Caco-2 (cell line): ENCODE measurements at regions of chr3 and their contacts with region 1.

Region 1: DNA sequence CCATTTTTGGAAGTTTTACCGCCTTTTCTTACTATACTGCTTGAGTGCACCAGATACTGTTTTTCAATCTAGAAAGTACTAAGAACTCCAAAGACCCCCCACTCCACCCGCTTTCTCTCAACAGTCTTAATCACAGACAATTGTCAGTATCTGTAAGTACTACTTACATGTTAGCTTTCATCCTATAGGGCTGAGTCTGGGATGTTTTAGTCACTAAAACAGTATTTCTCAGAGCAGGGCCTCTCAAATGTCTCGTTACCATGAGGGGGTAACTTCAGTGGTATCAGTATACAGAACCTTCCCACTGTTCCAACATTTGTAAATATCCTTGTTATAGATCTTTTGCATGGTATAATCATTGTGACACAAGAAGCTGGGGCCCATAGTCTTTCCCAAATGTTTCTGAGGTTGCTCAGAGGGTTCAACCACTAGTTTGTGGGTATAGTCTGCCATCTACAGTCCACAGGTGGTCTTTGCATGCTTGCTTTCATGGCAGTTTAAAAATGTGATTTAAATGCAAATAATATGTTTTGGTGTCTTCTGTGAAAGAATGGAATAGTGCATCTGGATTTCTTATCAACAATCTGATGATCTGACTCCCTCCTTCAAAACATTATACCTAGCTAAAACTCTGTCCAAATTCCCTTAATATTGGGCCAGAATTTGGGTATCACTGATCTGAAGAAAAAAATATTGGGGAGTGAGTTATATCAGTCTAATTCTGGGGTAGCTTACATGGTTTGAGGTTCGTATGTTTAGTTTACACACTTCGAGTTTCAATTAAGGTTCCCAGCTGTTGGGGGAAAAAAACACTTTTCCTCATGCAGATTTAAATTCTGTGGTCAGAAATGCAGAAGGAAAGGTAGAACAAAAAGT is 18.0 kb upstream of the DNAJC13 start:
- DNase-seq: peak in 1 of 2 experiments; percentile 49
- H3K4me3 ChIP-seq: no peak overlapping the region
- H3K4me3 Mint-ChIP-seq: no peak overlapping the region
- H3K27ac Mint-ChIP-seq: no peak overlapping the region
- H3K4me1 ChIP-seq: no peaks in the 10 kb centered on the region
- H3K4me1 Mint-ChIP-seq: no peaks in the 10 kb centered on the region
- H3K27me3 ChIP-seq: no peaks in the 10 kb centered on the region
- H3K27me3 Mint-ChIP-seq: no peaks in the 10 kb centered on the region
- CTCF ChIP-seq: peak; percentile 78 to 83

Region 2: GRCh38 chr3:132343018-132343612 is 56.2 kb before region 1 on chr3:
- CTCF ChIA-PET with region 1: interaction called, 3 read pairs
- POLR2A ChIA-PET with region 1: no interaction called
- intact Hi-C with region 1: loop called (anchors 2 kb)
- DNase-seq: peak; percentile 33 to 56
- H3K4me3 ChIP-seq: no peak overlapping the region
- H3K4me3 Mint-ChIP-seq: no peak overlapping the region
- H3K27ac Mint-ChIP-seq: no peak overlapping the region
- H3K4me1 ChIP-seq: no peaks in the 10 kb centered on the region
- H3K4me1 Mint-ChIP-seq: peaks cover 6% of the 10 kb centered on the region
- H3K27me3 ChIP-seq: no peaks in the 10 kb centered on the region
- H3K27me3 Mint-ChIP-seq: no peaks in the 10 kb centered on the region
- CTCF ChIP-seq: peak; percentile 81 to 88

Region 3: GRCh38 chr3:132352541-132353143 is 46.6 kb before region 1 on chr3:
- CTCF ChIA-PET with region 1: interaction called, 5 read pairs
- POLR2A ChIA-PET with region 1: no interaction called
- intact Hi-C with region 1: loop called (anchors 1 kb)
- DNase-seq: peak; percentile 61 to 70
- H3K4me3 ChIP-seq: no peak overlapping the region
- H3K4me3 Mint-ChIP-seq: no peak overlapping the region
- H3K27ac Mint-ChIP-seq: no peak overlapping the region
- H3K4me1 ChIP-seq: no peaks in the 10 kb centered on the region
- H3K4me1 Mint-ChIP-seq: peaks cover 14% of the 10 kb centered on the region
- H3K27me3 ChIP-seq: no peaks in the 10 kb centered on the region
- H3K27me3 Mint-ChIP-seq: no peaks in the 10 kb centered on the region
- CTCF ChIP-seq: peak; percentile 80 to 86

Region 4: DNA sequence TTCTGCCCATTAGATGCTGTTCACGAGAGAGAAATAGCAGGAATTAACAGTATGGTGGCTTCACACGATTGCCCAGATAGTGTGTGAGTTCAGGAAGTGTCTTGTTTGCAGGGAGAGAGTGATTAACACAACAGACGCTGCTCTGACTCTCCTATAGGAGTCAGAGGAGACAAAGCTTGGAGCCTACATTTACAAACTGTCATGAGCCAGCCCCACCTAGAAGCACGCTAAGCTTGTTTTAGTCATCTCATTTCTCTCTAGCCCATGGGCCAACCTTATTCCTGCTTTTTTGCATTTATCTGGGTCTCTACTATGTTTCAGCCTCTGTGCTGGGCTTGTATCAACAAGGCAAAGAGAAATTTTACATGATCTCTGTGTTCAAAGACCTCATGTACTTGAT is 872.2 kb after region 1 on chr3:
- CTCF ChIA-PET with region 1: no interaction called
- POLR2A ChIA-PET with region 1: no interaction called
- intact Hi-C with region 1: no loop called
- DNase-seq: no peak
- H3K4me3 ChIP-seq: no peak overlapping the region
- H3K4me3 Mint-ChIP-seq: no peak overlapping the region
- H3K27ac Mint-ChIP-seq: no peak overlapping the region
- H3K4me1 ChIP-seq: no peaks in the 10 kb centered on the region
- H3K4me1 Mint-ChIP-seq: no peaks in the 10 kb centered on the region
- H3K27me3 ChIP-seq: no peaks in the 10 kb centered on the region
- H3K27me3 Mint-ChIP-seq: peaks cover 8% of the 10 kb centered on the region
- CTCF ChIP-seq: no peak